PC-3 (cell line): ENCODE measurements at regions of chr11 and their contacts with region 1.

Region 1: DNA sequence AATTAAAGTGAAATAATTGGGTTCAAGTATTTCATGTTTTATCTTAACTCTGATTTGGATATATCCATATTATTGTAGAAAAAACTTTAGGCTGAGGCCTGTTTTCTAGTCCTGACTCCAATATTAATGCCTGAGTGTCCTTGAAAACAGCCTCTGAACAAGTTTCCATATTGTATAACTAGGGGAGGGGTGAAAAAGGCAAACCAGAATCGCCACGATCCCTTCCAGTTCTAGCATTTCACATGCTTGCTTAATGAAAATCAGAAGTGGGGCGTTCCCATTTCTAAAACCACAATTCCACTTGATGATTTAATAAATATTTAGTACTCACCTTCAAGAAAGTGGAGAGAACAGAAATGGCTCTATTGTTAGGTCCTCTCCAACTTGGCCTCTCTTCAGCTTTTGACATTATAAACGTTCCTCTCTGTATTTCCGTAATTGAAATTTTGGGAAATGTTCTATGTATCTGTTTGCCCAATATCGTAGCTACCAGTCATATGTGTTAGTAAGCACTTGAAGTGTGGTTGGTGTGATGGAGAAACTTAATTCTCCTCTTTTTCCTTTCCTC is 561.4 kb upstream of the CCDC90B start:
- DNase-seq: no peak
- ATAC-seq: no peak
- H3K4me3 ChIP-seq: no peak overlapping the region
- H3K27ac ChIP-seq: no peak overlapping the region
- H3K4me1 ChIP-seq: no peaks in the 10 kb centered on the region
- H3K27me3 ChIP-seq: peaks cover 33% of the 10 kb centered on the region
- CTCF ChIP-seq: no peak

Region 2: DNA sequence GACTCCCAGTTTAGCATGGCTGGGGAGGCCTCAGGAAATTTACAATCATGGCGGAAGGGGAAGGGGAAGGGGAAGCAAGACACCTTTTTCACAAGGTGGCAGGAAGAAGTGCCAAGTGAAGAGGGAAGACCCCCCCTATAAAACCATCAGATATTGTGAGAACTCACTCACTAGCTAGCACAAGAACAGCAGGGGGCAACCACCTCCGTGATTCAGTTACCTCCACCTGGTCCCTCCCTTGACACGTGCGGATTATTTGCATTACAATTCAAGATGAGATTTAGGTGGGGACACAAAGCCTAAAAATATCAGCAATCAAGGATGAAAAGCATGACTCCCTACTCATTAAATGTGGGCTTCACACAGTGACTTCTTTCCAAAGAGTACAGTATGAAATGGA is 406.4 kb before region 1 on chr11:
- CTCF ChIA-PET with region 1: no interaction called
- POLR2A ChIA-PET with region 1: no interaction called
- intact Hi-C with region 1: no loop called
- DNase-seq: no peak
- ATAC-seq: no peak
- H3K4me3 ChIP-seq: no peak overlapping the region
- H3K27ac ChIP-seq: no peak overlapping the region
- H3K4me1 ChIP-seq: no peaks in the 10 kb centered on the region
- H3K27me3 ChIP-seq: peaks cover 28% of the 10 kb centered on the region
- CTCF ChIP-seq: no peak

Region 3: DNA sequence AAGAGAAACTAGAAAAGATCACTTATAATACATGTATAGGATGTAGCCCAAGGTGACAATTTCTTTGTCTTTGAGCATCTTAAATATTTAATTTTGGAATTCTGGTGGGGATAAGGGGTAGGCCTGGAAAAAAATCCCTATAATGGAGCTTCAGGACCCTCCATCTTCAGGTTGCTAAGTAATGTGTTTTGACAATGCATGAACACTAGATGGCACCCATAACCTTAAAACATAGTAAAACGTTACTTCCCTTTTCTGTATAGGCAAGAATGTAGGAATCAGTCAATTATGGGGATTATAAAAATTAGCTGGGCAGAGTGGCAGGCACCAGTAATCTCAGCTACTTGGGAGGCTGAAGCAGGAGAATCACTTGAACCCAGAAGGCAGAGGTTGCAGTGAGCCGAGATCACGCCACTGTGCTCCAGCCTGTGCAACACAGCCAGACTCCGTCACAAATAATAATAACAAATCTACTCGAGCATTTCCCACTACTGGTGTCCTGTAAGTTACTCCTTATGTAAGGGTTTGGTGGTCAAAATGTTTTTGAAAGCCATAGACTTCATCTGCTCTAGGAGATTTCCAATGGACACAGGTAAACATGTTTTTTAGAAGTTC is 19.5 kb before region 1 on chr11:
- CTCF ChIA-PET with region 1: interaction called, 12 read pairs
- POLR2A ChIA-PET with region 1: no interaction called
- intact Hi-C with region 1: no loop called
- DNase-seq: peak; percentile 55
- ATAC-seq: peak; percentile 63; the same call in 1 of the 2 replicates
- H3K4me3 ChIP-seq: no peak overlapping the region
- H3K27ac ChIP-seq: no peak overlapping the region
- H3K4me1 ChIP-seq: no peaks in the 10 kb centered on the region
- H3K27me3 ChIP-seq: peaks cover 25% of the 10 kb centered on the region
- CTCF ChIP-seq: peak; percentile 76

Region 4: GRCh38 chr11:83895516-83895915 is 48.0 kb after region 1 on chr11:
- CTCF ChIA-PET with region 1: no interaction called
- POLR2A ChIA-PET with region 1: no interaction called
- intact Hi-C with region 1: no loop called
- DNase-seq: no peak
- ATAC-seq: no peak
- H3K4me3 ChIP-seq: no peak overlapping the region
- H3K27ac ChIP-seq: no peak overlapping the region
- H3K4me1 ChIP-seq: no peaks in the 10 kb centered on the region
- H3K27me3 ChIP-seq: no peaks in the 10 kb centered on the region
- CTCF ChIP-seq: no peak

Region 5: GRCh38 chr11:83918476-83918875 is 70.9 kb after region 1 on chr11:
- CTCF ChIA-PET with region 1: no interaction called
- POLR2A ChIA-PET with region 1: no interaction called
- intact Hi-C with region 1: no loop called
- DNase-seq: no peak
- ATAC-seq: no peak
- H3K4me3 ChIP-seq: no peak overlapping the region
- H3K27ac ChIP-seq: no peak overlapping the region
- H3K4me1 ChIP-seq: no peaks in the 10 kb centered on the region
- H3K27me3 ChIP-seq: no peaks in the 10 kb centered on the region
- CTCF ChIP-seq: no peak

Region 6: DNA sequence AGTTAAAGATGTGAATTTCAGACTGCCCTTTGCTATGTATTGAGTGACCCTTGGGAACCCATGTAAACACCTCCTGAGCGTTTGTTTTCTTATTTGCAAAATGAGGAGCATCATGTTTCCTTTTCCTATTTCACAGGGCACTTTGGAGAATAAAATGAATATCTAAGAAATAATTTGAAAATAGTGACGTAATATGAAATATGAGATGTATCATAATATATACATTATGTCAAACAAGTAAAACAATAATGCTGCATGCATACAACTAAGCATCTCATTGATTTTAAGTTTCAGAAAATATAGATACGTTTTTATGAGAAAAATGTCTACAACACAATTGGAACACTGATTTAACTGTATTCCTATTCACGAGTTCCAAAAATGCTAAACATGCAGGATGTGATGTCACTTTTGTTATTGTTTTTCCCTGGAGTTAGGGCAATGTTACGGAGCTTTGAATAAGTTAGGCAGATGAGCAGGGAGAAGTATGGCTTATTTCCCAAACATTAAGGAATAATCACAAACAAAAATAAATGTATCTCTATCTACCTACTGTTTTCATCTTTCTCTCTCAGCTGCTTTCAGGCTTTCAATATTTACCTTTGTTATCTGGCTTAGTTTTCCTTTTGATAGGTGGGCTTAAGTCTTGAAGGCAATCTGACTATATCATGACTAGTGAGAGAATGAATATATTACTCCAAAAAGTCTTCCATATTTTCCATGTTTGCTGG is 292.8 kb after region 1 on chr11:
- CTCF ChIA-PET with region 1: no interaction called
- POLR2A ChIA-PET with region 1: no interaction called
- intact Hi-C with region 1: no loop called
- DNase-seq: no peak
- ATAC-seq: no peak
- H3K4me3 ChIP-seq: no peak overlapping the region
- H3K27ac ChIP-seq: no peak overlapping the region
- H3K4me1 ChIP-seq: no peaks in the 10 kb centered on the region
- H3K27me3 ChIP-seq: no peaks in the 10 kb centered on the region
- CTCF ChIP-seq: no peak